ENCODE measurements at regions of chr3 and their contacts with region 1.

Region 1: GRCh38 chr3:27312044-27312668 is 57.0 kb downstream of the NEK10 start:
- DNase-seq: peak; percentile 74
- H3K4me3 ChIP-seq: peak overlapping the region; percentile 31
- H3K27ac ChIP-seq: peak overlapping the region; percentile 84
- H3K4me1 ChIP-seq: peaks cover 26% of the 10 kb centered on the region
- H3K27me3 ChIP-seq: no peaks in the 10 kb centered on the region

Region 2: DNA sequence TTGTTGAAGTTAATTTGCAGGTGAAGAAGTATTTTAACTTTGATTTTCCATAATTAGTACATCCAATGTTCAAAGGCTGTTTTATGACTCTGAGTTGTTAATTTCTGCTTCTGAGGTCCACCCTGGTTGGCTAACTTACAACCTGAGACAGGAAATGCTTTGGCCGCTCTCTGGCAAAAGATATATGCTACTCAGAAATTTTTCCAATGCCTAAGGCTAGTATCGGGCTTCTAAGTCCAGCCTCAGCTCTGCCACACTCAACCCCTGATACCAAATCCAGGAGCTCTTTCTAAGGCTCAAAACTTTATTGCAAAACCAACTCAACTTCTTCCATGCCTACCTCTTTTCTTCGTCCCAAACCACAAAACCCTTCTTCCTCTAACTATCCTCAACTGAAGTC is 135.9 kb before region 1 on chr3:
- in situ Hi-C with region 1: no loop called
- DNase-seq: peak; percentile 9
- H3K4me3 ChIP-seq: no peak overlapping the region
- H3K27ac ChIP-seq: no peak overlapping the region
- H3K4me1 ChIP-seq: no peaks in the 10 kb centered on the region
- H3K27me3 ChIP-seq: no peaks in the 10 kb centered on the region

Region 3: DNA sequence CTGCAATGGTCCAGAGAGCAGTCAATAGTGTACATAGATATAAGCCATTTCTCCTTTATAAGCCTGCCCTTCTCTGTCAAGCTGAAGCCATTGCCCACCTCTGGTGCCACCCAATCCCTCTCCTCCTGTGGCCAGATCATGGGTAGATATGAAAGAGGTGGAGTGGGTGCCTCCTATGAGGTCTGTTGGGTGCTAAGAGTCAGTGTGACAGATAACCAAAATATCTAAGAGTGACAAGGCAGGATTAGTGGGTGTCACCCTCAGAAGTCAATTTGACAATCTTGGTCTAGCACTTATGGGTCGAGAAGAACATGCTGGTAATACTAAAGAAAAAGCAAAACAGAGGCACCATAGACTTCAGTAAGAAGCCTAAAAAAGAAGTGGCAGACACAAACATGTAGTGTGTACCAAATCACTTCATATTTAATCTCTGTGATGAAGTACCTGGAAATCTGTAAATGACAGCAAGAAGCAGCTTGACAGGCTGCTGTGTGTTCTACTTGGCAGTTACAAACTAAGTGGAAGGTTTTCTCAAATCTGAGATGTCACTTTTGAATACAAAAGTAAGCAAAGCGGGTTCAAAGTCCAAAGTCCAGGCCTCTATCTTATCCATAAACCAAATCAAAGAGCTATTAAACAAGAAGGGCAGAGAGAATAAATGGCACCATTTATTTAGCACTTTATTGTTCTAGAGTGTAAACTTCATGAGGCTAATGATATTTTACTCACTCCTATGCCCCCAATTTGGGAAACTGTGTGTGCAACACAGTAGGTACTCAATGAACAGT is 528.8 kb after region 1 on chr3:
- in situ Hi-C with region 1: no loop called
- DNase-seq: no peak
- H3K4me3 ChIP-seq: no peak overlapping the region
- H3K27ac ChIP-seq: no peak overlapping the region
- H3K4me1 ChIP-seq: no peaks in the 10 kb centered on the region
- H3K27me3 ChIP-seq: peaks cover 6% of the 10 kb centered on the region; the same call in 1 of the 2 replicates

Region 4: GRCh38 chr3:28317438-28318022 is 1005.4 kb after region 1 on chr3:
- in situ Hi-C with region 1: loop called (anchors 25 kb)
- DNase-seq: peak; percentile 70
- H3K4me3 ChIP-seq: no peak overlapping the region
- H3K27ac ChIP-seq: no peak overlapping the region
- H3K4me1 ChIP-seq: peaks cover 6% of the 10 kb centered on the region
- H3K27me3 ChIP-seq: no peaks in the 10 kb centered on the region